BJ (cell line): ENCODE measurements at regions of chr6 and their contacts with region 1.

Region 1: GRCh38 chr6:36904114-36904513 is 18.4 kb downstream of the C6orf89 start:
- DNase-seq: no peak
- H3K4me3 ChIP-seq: no peak overlapping the region
- H3K27me3 ChIP-seq: no peaks in the 10 kb centered on the region
- CTCF ChIP-seq: no peak

Region 2: GRCh38 chr6:36979347-36979742 is 75.2 kb after region 1 on chr6:
- CTCF ChIA-PET with region 1: interaction called, 13 read pairs
- POLR2A ChIA-PET with region 1: no interaction called
- DNase-seq: no peak
- H3K4me3 ChIP-seq: no peak overlapping the region
- H3K27me3 ChIP-seq: no peaks in the 10 kb centered on the region
- CTCF ChIP-seq: peak; percentile 90